Lower leg skin (tissue), 4 donors: ENCODE measurements at regions of chr5 and their contacts with region 1.

Region 1: GRCh38 chr5:178279725-178280438 is 47.3 kb upstream of the PHYKPL start:
- DNase-seq: peak; percentile 74 to 96
- H3K4me3 ChIP-seq: no peak overlapping the region
- CTCF ChIP-seq: peak in 1 of 3 donors; percentile 64
- POLR2A ChIP-seq: no peak

Region 2: DNA sequence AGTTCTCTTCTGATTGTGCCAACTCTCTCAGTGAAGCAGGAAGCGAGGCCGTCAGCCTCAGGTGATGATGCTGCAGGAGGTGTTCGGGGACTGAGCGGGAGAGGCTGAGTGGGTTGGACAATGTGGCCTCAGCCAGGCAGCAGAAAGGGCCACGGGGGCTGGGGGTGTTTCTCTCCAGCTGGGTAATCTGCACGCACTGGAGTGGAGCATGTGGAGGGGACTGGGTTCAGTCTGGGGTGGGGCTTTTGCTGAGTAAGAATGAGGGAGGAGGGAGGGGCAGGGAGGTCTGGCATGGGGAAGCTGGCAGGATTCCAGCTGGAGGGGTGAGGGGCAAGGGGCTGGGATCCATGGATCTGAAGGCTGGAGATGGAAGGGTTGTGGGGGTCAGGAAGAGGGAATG is 13.5 kb after region 1 on chr5:
- intact Hi-C with region 1: no loop called
- DNase-seq: peak in 1 of 2 donors; percentile 76
- H3K4me3 ChIP-seq: no peak overlapping the region
- CTCF ChIP-seq: no peak
- POLR2A ChIP-seq: no peak

Region 3: GRCh38 chr5:178551059-178551458 is 271.2 kb after region 1 on chr5:
- intact Hi-C with region 1: loop called (anchors 10 kb)
- DNase-seq: no peak
- H3K4me3 ChIP-seq: no peak overlapping the region
- CTCF ChIP-seq: no peak
- POLR2A ChIP-seq: no peak

Region 4: DNA sequence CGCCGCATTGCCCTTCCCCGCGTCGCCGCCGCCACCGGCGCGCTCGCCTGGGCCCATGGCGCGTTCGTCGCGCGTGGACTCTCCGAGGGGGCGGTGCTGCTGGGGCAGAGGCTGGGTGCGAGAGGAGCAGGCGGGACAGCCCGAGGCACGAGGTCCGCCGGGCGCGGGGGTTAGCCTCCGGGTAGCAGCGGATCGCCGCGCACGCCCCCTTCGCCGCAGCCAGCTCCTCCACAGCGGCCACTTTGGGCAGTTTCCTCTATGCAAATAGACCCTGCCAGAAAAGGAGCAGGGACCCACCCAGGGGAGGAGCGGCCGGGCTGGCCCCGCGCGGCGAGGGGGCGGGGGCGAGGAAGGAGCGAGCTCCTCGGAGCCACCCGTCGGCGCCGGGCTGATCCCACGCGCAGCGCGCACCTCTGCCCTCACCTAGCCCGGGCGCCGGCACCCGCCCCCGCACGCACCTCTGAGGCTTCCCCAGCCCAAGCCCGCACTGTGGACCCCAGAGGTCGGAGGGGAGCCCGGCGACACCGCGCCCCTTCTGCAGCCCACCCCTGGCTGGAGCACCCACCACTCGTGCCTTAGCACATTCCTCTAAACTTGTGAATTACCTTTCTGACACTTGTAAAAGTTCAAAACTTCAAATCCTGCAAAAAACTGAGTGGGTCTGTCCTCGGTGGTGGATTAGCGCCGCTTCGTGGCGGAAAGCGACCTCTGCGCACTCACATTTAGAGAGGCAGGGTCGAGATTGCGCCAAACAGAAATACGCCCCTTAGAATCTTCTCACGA is 310.4 kb after region 1 on chr5 and contains the start of gene COL23A1:
- intact Hi-C with region 1: loop called (anchors 5 kb)
- DNase-seq: peak in 1 of 2 donors; percentile 88
- H3K4me3 ChIP-seq: peak within 1 kb of the TSS; percentile 20
- CTCF ChIP-seq: peak in 1 of 3 donors; percentile 33
- POLR2A ChIP-seq: no peak
- total RNA-seq, gene COL23A1: 2.5 to 3.4 (median 3.0) TPM